Left ventricle myocardium superior (tissue), 1 donor: ENCODE measurements at regions of chr5 and their contacts with region 1.

Region 1: DNA sequence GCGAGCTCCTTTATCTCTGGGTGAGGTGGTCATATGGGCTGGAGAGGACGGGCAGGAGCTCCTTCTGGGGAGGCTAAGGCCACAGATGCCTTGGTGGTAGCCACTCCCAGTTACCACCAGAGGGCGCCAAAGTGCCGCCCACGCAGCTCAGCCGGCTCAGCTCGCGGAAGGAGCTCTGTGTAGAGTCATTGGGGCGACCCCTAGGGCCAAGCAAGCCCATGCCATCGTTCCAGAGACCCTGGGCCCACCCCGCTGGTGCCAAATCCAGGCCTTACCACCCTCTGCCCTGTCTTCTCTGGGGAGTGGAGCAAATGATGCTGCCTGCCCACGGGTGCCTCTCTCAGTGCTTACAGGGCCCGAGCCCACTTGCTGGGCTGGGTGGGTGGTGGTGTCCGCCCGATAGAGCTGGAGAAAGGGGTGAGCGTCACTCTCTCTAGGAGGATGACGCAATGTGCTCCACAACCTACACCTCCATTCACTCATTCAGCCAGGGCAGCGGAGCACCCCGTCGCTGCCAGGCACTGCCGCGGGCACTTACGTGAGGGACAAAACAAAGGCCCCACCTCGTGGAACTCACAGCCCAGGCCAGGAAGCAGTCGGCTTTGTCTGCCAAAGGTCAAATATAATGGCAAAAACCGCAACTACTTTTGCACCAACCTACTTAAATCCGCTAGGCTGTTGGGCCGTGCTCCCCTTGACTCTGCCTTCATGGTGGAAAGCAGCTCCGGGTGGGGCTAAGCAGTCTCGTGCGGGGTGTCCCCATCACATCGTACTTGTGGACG is 13.8 kb downstream of the TSPAN17 start:
- DNase-seq: peak; percentile 82
- ATAC-seq: peak; percentile 80

Region 2: GRCh38 chr5:176436661-176437071 is 224.4 kb before region 1 on chr5:
- intact Hi-C with region 1: no loop called
- DNase-seq: no peak
- ATAC-seq: peak; percentile 36

Region 3: DNA sequence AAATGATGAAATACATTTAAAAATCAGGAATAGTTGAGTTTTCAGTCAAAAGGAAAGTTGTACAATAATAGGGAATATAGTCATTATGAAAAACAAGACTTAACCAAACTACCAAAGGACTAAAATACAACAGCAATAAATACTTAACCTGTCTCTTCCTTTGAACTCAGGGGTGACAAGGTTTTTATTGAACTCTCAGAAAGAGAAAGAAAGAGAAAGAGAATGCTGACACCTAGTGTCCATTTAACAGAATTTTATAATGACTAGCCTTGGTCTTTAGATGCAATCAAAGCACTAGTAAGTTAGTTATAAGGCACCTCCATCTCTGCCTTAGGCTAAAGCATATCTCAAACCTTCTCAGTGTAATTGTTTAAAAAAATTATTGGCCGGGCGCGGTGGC is 298.0 kb after region 1 on chr5:
- intact Hi-C with region 1: loop called (anchors 5 kb)
- DNase-seq: no peak
- ATAC-seq: peak; percentile 42